Activated CD8-positive, alpha-beta memory T cell treated with anti-CD3 and anti-CD28 coated beads, Interleukin-2, amount 10 ng/mL, durations not matched to agents 7 days and 5 days (primary cell): ENCODE measurements at regions of chr2 and their contacts with region 1.

Region 1: GRCh38 chr2:68925295-68925896 is 27.3 kb downstream of the GKN2 start:
- DNase-seq: peak; percentile 70
- ATAC-seq: peak; percentile 85
- H3K4me3 Mint-ChIP-seq: no peak overlapping the region
- H3K27ac Mint-ChIP-seq: no peak overlapping the region
- H3K4me1 Mint-ChIP-seq: peaks cover 4% of the 10 kb centered on the region
- H3K27me3 Mint-ChIP-seq: peaks cover 30% of the 10 kb centered on the region

Region 2: GRCh38 chr2:68487773-68488355 is 437.5 kb before region 1 on chr2:
- CTCF ChIA-PET with region 1: interaction called, 25 read pairs
- DNase-seq: no peak
- ATAC-seq: no peak
- H3K4me3 Mint-ChIP-seq: no peak overlapping the region
- H3K27ac Mint-ChIP-seq: no peak overlapping the region
- H3K4me1 Mint-ChIP-seq: peaks cover 3% of the 10 kb centered on the region
- H3K27me3 Mint-ChIP-seq: no peaks in the 10 kb centered on the region

Region 3: GRCh38 chr2:68709421-68709911 is 215.9 kb before region 1 on chr2:
- CTCF ChIA-PET with region 1: interaction called, 38 read pairs
- DNase-seq: no peak
- ATAC-seq: peak; percentile 82
- H3K4me3 Mint-ChIP-seq: no peak overlapping the region
- H3K27ac Mint-ChIP-seq: peak overlapping the region; percentile 7
- H3K4me1 Mint-ChIP-seq: peaks cover 26% of the 10 kb centered on the region
- H3K27me3 Mint-ChIP-seq: peaks cover 2% of the 10 kb centered on the region

Region 4: DNA sequence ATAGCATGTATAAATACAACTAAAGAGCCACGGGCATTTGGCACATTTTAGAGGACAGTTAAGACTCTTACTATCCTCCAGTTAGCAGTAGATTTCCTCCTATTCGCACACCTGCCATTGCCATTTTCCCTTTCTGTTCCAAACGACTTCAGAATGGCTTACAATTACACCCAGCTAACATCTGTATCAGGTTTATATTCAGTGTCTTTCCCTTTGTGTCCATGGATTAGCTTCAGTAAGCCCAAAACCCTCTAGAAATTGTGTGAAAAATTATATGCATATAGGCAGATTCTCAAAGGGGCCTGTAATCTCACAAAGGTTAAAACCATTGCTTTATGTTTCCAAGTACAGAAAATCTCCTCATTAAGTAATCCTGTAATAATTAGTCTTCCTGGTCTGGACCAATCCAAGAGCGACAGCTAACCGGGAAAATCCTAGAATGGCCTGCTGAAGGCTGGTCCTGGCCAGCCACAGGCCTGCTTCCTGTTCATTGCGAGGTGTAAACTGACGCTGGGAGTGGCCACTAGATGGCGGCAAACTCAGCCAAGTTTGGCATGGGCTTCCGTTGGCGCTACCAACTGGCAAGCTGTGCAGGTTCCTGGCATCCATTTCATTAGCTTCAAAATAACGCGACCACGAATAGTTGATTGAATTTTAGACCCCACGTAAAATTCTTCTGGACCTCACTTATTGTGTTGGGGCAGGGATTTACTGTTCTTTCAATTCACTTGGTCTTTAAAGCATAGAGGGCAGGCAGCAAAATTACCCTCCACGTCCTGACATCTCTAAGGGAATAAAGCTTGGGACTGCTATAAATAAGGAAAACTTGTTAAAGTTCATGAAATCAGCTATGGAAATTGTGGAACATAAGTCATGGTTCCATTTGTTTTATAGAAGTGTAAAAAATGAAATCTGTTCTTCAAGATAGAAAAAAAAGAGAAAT is 173.7 kb before region 1 on chr2:
- CTCF ChIA-PET with region 1: interaction called, 33 read pairs
- DNase-seq: peak; percentile 95
- ATAC-seq: peak; percentile 92
- H3K4me3 Mint-ChIP-seq: peak overlapping the region; percentile 27
- H3K27ac Mint-ChIP-seq: peak overlapping the region; percentile 77
- H3K4me1 Mint-ChIP-seq: peaks cover 88% of the 10 kb centered on the region
- H3K27me3 Mint-ChIP-seq: no peaks in the 10 kb centered on the region

Region 5: GRCh38 chr2:68837164-68837860 is 88.1 kb before region 1 on chr2:
- CTCF ChIA-PET with region 1: interaction called, 60 read pairs
- DNase-seq: peak; percentile 77
- ATAC-seq: peak; percentile 64
- H3K4me3 Mint-ChIP-seq: no peak overlapping the region
- H3K27ac Mint-ChIP-seq: peak overlapping the region; percentile 83
- H3K4me1 Mint-ChIP-seq: peaks cover 36% of the 10 kb centered on the region
- H3K27me3 Mint-ChIP-seq: no peaks in the 10 kb centered on the region

Region 6: GRCh38 chr2:68943581-68944568 is 18.5 kb after region 1 on chr2:
- CTCF ChIA-PET with region 1: interaction called, 16 read pairs
- DNase-seq: peak; percentile 63
- ATAC-seq: peak; percentile 60
- H3K4me3 Mint-ChIP-seq: no peak overlapping the region
- H3K27ac Mint-ChIP-seq: no peak overlapping the region
- H3K4me1 Mint-ChIP-seq: peaks cover 8% of the 10 kb centered on the region
- H3K27me3 Mint-ChIP-seq: peaks cover 66% of the 10 kb centered on the region